Lower leg skin (tissue), 4 donors: ENCODE measurements at regions of chr21 and their contacts with region 1.

Region 1: GRCh38 chr21:39800311-39800710 is 55.3 kb downstream of the IGSF5 start:
- DNase-seq: no peak
- H3K4me3 ChIP-seq: no peak overlapping the region
- CTCF ChIP-seq: no peak
- POLR2A ChIP-seq: no peak

Region 2: GRCh38 chr21:40356649-40357048 is 556.3 kb after region 1 on chr21:
- intact Hi-C with region 1: loop called (anchors 5 kb)
- DNase-seq: no peak
- H3K4me3 ChIP-seq: no peak overlapping the region
- CTCF ChIP-seq: no peak
- POLR2A ChIP-seq: no peak